ENCODE measurements at regions of chr10 and their contacts with region 1.

Region 1: GRCh38 chr10:15725603-15726002 is 5.9 kb upstream of the ITGA8 start:
- DNase-seq: peak; percentile 39
- ATAC-seq: peak; percentile 83
- H3K4me3 ChIP-seq: no peak overlapping the region
- H3K27ac ChIP-seq: no peak overlapping the region
- H3K4me1 ChIP-seq: no peaks in the 10 kb centered on the region
- H3K27me3 ChIP-seq: peaks cover 2 to 27% of the 10 kb centered on the region in 2 experiments; a peak in 3 of 5 replicates
- CTCF ChIP-seq: peak; percentile 63
- EP300 ChIP-seq: no peak
- POLR2A ChIP-seq: no peak
- RAD21 ChIP-seq: no peak

Region 2: DNA sequence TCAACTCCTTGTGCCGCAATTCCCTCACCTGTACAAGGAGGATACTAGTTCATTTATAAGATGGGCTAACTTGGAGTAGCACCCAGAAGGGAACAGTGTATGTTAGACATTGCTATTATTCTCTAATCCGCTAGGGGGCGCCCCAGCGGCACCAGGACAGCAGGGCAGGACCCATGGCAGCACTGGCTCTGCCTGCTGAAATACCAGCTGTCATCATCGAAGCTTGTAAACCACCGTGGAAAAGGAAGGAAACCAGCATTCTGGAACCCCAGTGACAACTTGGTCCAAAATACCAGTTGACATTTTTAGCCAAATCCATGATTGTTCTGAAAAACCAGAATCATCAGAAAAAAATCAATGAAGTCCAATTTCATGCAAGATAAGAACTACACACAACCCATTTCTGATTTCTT is 140.3 kb before region 1 on chr10:
- CTCF ChIA-PET with region 1: no interaction called
- POLR2A ChIA-PET with region 1: no interaction called
- in situ Hi-C with region 1: no loop called
- intact Hi-C with region 1: loop called (anchors 5 kb)
- DNase-seq: peak; percentile 27
- ATAC-seq: peak; percentile 91
- H3K4me3 ChIP-seq: no peak overlapping the region
- H3K27ac ChIP-seq: no peak overlapping the region
- H3K4me1 ChIP-seq: no peaks in the 10 kb centered on the region
- H3K27me3 ChIP-seq: no peaks in the 10 kb centered on the region
- CTCF ChIP-seq: peak; percentile 72
- EP300 ChIP-seq: no peak
- POLR2A ChIP-seq: no peak
- RAD21 ChIP-seq: no peak

Measured in HepG2 (cell line).